K562 (cell line): ENCODE measurements at regions of chr9 and their contacts with region 1.

Region 1: DNA sequence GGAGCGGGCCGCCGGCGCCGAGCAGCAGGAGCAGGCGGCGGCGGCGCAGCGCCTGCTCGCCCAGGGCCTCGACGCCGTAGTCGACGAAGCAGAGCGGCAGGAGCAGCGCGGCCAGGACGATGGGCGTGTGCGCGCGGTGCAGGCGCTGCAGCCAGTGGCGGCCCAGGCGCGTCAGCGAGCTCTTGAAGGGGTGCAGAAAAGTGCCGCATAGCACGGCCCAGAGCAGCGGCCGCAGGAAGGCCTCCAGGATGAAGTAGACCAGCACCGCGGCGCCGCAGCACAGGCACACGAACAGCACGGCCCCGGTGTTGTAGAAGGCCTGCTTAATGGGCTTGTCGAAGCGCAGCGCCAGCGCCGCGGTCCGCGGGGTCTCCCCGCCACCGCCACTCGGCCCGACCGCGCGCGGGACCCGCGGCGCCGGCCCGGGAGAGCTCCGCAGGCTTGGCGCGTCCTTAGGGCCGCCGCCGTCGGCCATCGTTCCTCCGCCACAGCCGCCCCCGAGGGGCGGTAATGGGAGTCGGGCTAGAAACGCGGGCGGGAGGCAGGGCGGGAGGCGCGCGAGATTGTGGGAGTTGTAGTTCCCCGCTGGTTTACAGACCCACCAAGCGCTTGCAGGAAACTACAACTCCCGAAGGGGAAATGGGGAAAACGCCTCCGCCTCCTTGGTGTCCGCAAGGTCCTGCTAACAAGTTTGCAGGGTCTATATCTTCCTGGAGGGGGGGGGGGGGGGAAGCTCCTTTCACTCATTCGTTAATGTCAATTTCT is at the start of gene TMEM245:
- DNase-seq: peak; percentile 84 to 99 (median 88)
- ATAC-seq: peak; percentile 89
- H3K4me3 ChIP-seq: peak within 1 kb of the TSS; percentile 90
- H3K27ac ChIP-seq: peak within 1 kb of the TSS; percentile 87
- H3K4me1 ChIP-seq: peaks cover 34 to 53% of the 10 kb centered on the region in 2 experiments
- H3K27me3 ChIP-seq: no peaks in the 10 kb centered on the region
- CTCF ChIP-seq: 0 out of 6 replicates have a peak, but pooled peaks of 1 of the 3 experiments have one; percentile 23
- EP300 ChIP-seq: no peak
- POLR2A ChIP-seq: no peak; the same call in 1 of the 2 replicates
- RAD21 ChIP-seq: no peak; a peak in 1 of 4 replicates
- polyA plus RNA-seq, gene TMEM245: 8.5 to 12.1 TPM

Region 2: DNA sequence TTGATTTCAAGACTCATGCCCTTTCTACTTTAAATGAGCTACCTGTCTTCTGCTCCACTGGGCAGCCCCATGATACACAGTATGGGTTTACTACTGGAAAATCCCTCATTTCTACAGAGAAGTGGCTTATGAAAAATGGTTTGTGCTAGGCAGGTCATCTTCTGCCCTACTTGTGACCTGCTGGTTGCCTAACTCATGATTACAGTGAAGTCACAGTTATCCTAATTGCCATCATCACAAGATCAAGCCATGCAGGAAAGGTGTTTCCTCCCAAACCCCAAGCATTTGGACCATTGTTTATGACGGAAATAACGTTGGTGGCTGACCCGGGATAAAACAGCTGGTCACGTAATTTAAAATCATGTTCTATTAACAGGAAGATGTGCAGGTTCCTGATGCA is 594.4 kb before region 1 on chr9:
- CTCF ChIA-PET with region 1: no interaction called
- POLR2A ChIA-PET with region 1: no interaction called
- in situ Hi-C with region 1: no loop called
- intact Hi-C with region 1: no loop called
- DNase-seq: no peak
- ATAC-seq: no peak
- H3K4me3 ChIP-seq: no peak overlapping the region
- H3K27ac ChIP-seq: no peak overlapping the region
- H3K4me1 ChIP-seq: no peaks in the 10 kb centered on the region
- H3K27me3 ChIP-seq: peaks cover 0 to 5% of the 10 kb centered on the region in 2 experiments; a peak in 1 of 5 replicates
- CTCF ChIP-seq: no peak
- EP300 ChIP-seq: no peak
- POLR2A ChIP-seq: no peak
- RAD21 ChIP-seq: no peak

Region 3: DNA sequence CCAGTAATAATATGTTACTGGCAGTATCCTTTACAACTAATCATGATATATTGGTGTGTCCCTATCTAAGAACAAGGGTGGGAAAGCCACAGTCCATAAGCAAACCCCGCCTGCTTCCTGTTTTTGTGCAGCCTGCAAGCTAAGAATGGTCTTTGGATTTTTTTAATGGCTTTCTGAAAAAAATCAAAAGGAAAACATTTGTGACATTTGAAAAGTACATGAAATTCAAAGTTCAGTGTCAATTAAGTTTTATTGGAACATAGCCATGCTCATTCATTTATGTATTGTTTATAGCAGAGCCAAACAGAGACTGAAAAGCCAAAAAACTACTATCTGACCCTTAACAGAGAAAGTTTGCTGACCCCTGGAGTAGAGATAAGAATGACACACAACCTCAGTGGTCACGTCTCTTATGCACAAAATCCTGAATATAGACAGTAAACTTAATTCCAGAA is 13.0 kb after region 1 on chr9:
- CTCF ChIA-PET with region 1: no interaction called
- POLR2A ChIA-PET with region 1: interaction called, 6 read pairs
- in situ Hi-C with region 1: no loop called
- intact Hi-C with region 1: loop called (anchors 1 kb)
- DNase-seq: peak; percentile 35 to 71 (median 45)
- ATAC-seq: peak; percentile 78
- H3K4me3 ChIP-seq: no peak overlapping the region
- H3K27ac ChIP-seq: peak overlapping the region; percentile 63
- H3K4me1 ChIP-seq: peaks cover 7 to 40% of the 10 kb centered on the region in 2 experiments; a peak in 4 of 5 replicates
- H3K27me3 ChIP-seq: no peaks in the 10 kb centered on the region
- CTCF ChIP-seq: peak in 2 of 3 experiments; percentile 24 to 46; a peak in 3 of 6 replicates
- EP300 ChIP-seq: peak; percentile 80
- POLR2A ChIP-seq: no peak
- RAD21 ChIP-seq: peak; percentile 39 to 66; a peak in 3 of 4 replicates

Region 4: GRCh38 chr9:109143881-109144562 is 24.4 kb after region 1 on chr9:
- CTCF ChIA-PET with region 1: no interaction called
- POLR2A ChIA-PET with region 1: interaction called, 8 read pairs
- in situ Hi-C with region 1: no loop called
- intact Hi-C with region 1: loop called (anchors 1 kb)
- DNase-seq: peak; percentile 72 to 89 (median 80)
- ATAC-seq: peak; percentile 97
- H3K4me3 ChIP-seq: no peak overlapping the region
- H3K27ac ChIP-seq: peak overlapping the region; percentile 40; the same call in 2 of the 3 replicates
- H3K4me1 ChIP-seq: peaks cover 13 to 15% of the 10 kb centered on the region in 2 experiments; a peak in 4 of 5 replicates
- H3K27me3 ChIP-seq: no peaks in the 10 kb centered on the region
- CTCF ChIP-seq: peak; percentile 57 to 65 (median 58)
- EP300 ChIP-seq: peak; percentile 51
- POLR2A ChIP-seq: 0 out of 2 replicates have a peak, but pooled peaks have one; percentile 54
- RAD21 ChIP-seq: peak; percentile 39 to 41; a peak in 3 of 4 replicates